ENCODE measurements at regions of chr3 and their contacts with region 1.

Region 1: DNA sequence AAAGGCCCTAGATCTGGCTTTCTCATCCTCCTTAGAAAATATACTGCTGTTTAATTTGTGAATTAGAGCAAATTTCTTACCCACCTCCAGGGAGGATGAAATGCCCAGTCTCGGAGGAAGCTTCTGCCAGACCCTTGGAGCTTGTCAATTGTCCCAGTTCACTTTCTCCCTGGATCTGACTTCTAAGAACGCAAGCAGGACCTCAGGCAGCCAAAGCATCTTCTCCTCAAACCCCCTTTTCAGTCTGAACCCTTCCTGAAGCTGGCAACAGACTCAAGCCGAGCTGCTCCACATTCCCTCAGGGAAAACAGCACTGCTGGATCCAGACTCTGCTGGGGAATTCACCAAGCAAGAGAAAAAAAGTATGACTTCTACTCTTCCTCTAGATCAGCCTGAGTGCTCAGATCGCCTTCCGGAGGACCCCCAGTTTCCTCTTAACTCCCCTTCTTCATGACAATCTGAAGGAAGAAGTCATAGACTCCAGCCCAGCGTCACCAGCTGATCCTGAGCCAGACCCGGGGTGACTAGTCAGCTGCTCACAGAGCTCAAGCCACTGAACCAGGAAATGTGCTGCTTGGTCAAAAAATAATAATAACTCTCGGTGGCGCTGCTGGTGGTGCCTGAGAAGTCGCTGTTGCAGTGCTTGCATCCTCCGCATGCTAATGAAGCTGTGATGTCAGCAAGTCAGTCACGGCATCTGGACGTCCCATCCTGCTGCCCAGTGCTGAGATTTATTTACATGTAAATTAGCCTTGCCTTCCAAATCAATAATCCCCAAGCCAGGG is at the start of gene PRICKLE2:
- DNase-seq: peak; percentile 80 to 85 (median 82)
- H3K4me3 ChIP-seq: peak within 1 kb of the TSS; percentile 24
- H3K27ac ChIP-seq: peak within 1 kb of the TSS; percentile 55 to 84
- H3K4me1 ChIP-seq: peaks cover 14% of the 10 kb centered on the region
- H3K27me3 ChIP-seq: no peaks in the 10 kb centered on the region
- CTCF ChIP-seq: peak in 1 of 3 donors; percentile 41
- EP300 ChIP-seq: no peak
- POLR2A ChIP-seq: peak; percentile 24
- total RNA-seq, gene PRICKLE2: 22.2 to 34.8 (median 27.2) TPM

Region 2: GRCh38 chr3:63896332-63897030 is 328.5 kb before region 1 on chr3:
- intact Hi-C with region 1: no loop called
- DNase-seq: no peak
- H3K4me3 ChIP-seq: no peak overlapping the region
- H3K27ac ChIP-seq: no peak overlapping the region
- H3K4me1 ChIP-seq: peaks cover 3% of the 10 kb centered on the region
- H3K27me3 ChIP-seq: no peaks in the 10 kb centered on the region
- CTCF ChIP-seq: no peak
- EP300 ChIP-seq: no peak
- POLR2A ChIP-seq: no peak

Region 3: DNA sequence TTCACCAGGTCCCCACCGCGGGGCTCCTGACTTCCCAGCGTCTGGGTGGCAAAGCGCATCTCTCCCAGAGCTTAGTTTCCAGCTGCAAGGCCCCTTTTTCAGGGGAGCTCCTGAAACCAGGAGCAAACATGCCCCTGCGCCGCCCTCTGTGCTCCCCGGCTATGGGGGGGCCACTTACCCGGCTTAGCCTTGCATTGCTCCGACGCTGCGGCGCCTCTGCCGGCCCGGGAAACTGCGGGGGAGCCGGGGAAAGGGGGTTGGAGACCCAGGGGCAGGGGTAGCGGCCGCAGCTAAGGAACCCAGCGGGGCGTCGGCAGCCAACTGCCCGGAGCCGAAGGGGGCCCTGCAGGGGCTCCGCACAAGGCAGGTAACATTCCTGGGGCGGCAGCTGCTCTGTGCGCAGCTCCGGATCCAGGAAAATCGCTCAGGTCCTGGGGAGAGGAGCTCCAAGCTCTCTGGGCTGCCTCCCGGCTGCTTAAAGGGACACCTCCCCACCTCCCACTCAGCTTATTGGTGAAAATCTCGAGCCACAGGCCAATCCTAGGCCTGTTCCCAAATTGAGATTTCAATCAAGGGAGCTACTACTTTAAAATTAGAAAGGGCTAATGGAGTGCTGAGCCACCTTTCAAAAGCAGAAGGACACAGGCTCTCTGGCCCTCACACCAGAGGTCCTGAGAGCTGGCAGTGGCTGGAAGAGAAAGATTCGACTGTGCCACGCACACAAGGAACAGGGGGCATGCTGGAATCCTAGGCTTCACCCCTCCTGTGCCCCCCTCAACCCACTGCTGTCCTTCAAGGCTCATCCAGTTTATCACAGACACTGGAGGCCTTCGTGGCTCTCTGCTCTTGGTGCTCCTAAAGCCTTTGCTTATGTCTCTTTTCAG is 42.9 kb after region 1 on chr3:
- intact Hi-C with region 1: loop called in 1 of 4 experiments (anchors 5 kb)
- DNase-seq: peak; percentile 54 to 70 (median 64)
- H3K4me3 ChIP-seq: peak overlapping the region; percentile 65
- H3K27ac ChIP-seq: peak overlapping the region; percentile 79 to 83
- H3K4me1 ChIP-seq: peaks cover 20% of the 10 kb centered on the region
- H3K27me3 ChIP-seq: no peaks in the 10 kb centered on the region
- CTCF ChIP-seq: no peak
- EP300 ChIP-seq: no peak
- POLR2A ChIP-seq: peak; percentile 49

Region 4: DNA sequence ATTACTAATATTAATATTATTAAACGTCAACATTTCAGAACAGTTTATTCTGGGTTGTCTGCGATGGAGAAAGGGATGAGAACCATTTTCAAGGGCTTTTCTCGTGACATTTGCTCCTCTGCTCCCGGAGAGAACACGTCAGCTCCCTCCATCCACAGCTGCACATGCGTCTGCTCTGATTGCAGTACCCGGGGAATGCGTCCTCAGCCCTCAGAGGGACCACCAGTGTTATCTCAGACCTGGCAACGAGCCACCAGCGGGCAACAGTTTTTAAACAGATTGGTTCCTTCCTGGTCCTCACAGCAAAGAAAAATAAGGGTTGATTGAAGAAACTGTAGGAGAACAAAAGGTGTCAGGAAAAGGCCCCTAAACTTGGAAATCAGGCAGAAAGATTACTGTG is 665.0 kb after region 1 on chr3:
- intact Hi-C with region 1: loop called in 1 of 4 experiments (anchors 10 kb)
- DNase-seq: peak; percentile 59 to 86 (median 69)
- H3K4me3 ChIP-seq: no peak overlapping the region
- H3K27ac ChIP-seq: peak overlapping the region in 1 of 2 donors; percentile 62
- H3K4me1 ChIP-seq: peaks cover 7% of the 10 kb centered on the region
- H3K27me3 ChIP-seq: no peaks in the 10 kb centered on the region
- CTCF ChIP-seq: no peak
- EP300 ChIP-seq: no peak
- POLR2A ChIP-seq: no peak

Measured in ovary (tissue), 10 donors.